Activated T-helper 1 cell treated with anti-CD3 and anti-CD28 coated beads, Interleukin-12 subunit alpha, Interleukin-12 subunit beta, Interleukin-2, Interleukin-4 antibody, amounts not matched to agents 30 ng/mL and 10 ng/mL and 1 ng/mL, durations not matched to agents 14 hours and 24 hours and 36 hours (primary cell): ENCODE measurements at regions of chr10 and their contacts with region 1.

Region 1: GRCh38 chr10:94439275-94439861 is 37.0 kb downstream of the TBC1D12 start:
- DNase-seq: no peak
- H3K4me3 Mint-ChIP-seq: no peak overlapping the region
- H3K27ac Mint-ChIP-seq: no peak overlapping the region
- H3K4me1 Mint-ChIP-seq: no peaks in the 10 kb centered on the region
- H3K27me3 Mint-ChIP-seq: no peaks in the 10 kb centered on the region

Region 2: GRCh38 chr10:94279835-94280709 is 159.3 kb before region 1 on chr10:
- intact Hi-C with region 1: loop called (anchors 1 kb)
- DNase-seq: peak; percentile 38
- H3K4me3 Mint-ChIP-seq: no peak overlapping the region
- H3K27ac Mint-ChIP-seq: no peak overlapping the region
- H3K4me1 Mint-ChIP-seq: no peaks in the 10 kb centered on the region
- H3K27me3 Mint-ChIP-seq: peaks cover 8% of the 10 kb centered on the region

Region 3: GRCh38 chr10:94423627-94424026 is 15.7 kb before region 1 on chr10:
- intact Hi-C with region 1: no loop called
- DNase-seq: no peak
- H3K4me3 Mint-ChIP-seq: no peak overlapping the region
- H3K27ac Mint-ChIP-seq: no peak overlapping the region
- H3K4me1 Mint-ChIP-seq: no peaks in the 10 kb centered on the region
- H3K27me3 Mint-ChIP-seq: peaks cover 4% of the 10 kb centered on the region